ENCODE measurements at regions of chr2 and their contacts with region 1.

Region 1: DNA sequence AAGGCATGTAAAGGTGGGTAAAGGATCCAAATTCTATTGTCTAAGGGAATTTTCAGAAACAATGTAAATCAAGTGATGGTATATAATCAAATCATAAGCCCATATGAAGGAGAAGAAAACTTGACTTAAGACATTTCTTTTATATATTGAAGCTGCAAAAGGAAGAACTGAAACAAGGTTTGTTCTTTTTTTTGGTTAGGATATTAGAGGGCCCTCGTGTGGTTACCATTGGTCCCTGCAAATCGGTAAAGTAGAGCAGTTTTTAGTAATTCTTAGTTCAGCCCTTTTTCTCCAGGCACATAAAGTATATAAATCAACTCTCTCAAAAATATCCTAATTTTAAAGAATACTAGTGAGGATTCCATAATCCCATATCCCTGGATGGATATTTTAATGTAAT is 105.6 kb upstream of the STK17B start:
- DNase-seq: peak; percentile 42
- H3K4me3 Mint-ChIP-seq: no peak overlapping the region
- H3K27ac Mint-ChIP-seq: peak overlapping the region; percentile 69
- H3K4me1 Mint-ChIP-seq: peaks cover 57% of the 10 kb centered on the region
- H3K27me3 Mint-ChIP-seq: no peaks in the 10 kb centered on the region

Region 2: GRCh38 chr2:194464964-194465638 is 1811.9 kb before region 1 on chr2:
- CTCF ChIA-PET with region 1: no interaction called
- POLR2A ChIA-PET with region 1: no interaction called
- intact Hi-C with region 1: loop called (anchors 10 kb)
- DNase-seq: peak; percentile 11
- H3K4me3 Mint-ChIP-seq: no peak overlapping the region
- H3K27ac Mint-ChIP-seq: no peak overlapping the region
- H3K4me1 Mint-ChIP-seq: no peaks in the 10 kb centered on the region
- H3K27me3 Mint-ChIP-seq: no peaks in the 10 kb centered on the region

Region 3: DNA sequence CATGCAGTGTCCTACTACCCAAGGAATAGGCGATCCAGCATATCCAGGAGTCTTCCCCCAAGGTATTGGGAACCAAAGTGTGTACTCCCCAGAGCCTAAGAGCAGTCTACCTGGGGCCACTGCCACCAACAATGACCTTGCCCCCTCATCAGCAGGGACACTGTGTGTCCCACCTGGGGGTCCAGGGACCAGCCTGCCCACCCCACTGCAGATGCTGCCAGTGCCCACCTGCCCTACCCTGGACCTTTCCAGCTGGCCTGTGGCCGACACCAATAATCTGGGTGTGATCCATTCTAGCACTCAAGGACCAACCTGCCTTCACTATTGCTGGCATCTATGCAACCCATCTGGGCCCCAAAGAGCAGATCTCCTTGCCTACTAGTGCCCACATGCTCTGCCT is 240.6 kb before region 1 on chr2:
- CTCF ChIA-PET with region 1: no interaction called
- POLR2A ChIA-PET with region 1: no interaction called
- intact Hi-C with region 1: no loop called
- DNase-seq: no peak
- H3K4me3 Mint-ChIP-seq: no peak overlapping the region
- H3K27ac Mint-ChIP-seq: no peak overlapping the region
- H3K4me1 Mint-ChIP-seq: no peaks in the 10 kb centered on the region
- H3K27me3 Mint-ChIP-seq: peaks cover 10% of the 10 kb centered on the region

Region 4: GRCh38 chr2:196101325-196101991 is 175.5 kb before region 1 on chr2:
- CTCF ChIA-PET with region 1: no interaction called
- POLR2A ChIA-PET with region 1: no interaction called
- intact Hi-C with region 1: no loop called
- DNase-seq: peak; percentile 69
- H3K4me3 Mint-ChIP-seq: no peak overlapping the region
- H3K27ac Mint-ChIP-seq: peak overlapping the region; percentile 31
- H3K4me1 Mint-ChIP-seq: peaks cover 31% of the 10 kb centered on the region
- H3K27me3 Mint-ChIP-seq: no peaks in the 10 kb centered on the region

Region 5: GRCh38 chr2:196143730-196144131 is 133.3 kb before region 1 on chr2:
- CTCF ChIA-PET with region 1: interaction called, 17 read pairs
- POLR2A ChIA-PET with region 1: interaction called, 3 read pairs
- intact Hi-C with region 1: no loop called
- DNase-seq: no peak
- H3K4me3 Mint-ChIP-seq: no peak overlapping the region
- H3K27ac Mint-ChIP-seq: peak overlapping the region; percentile 87
- H3K4me1 Mint-ChIP-seq: peaks cover 59% of the 10 kb centered on the region
- H3K27me3 Mint-ChIP-seq: no peaks in the 10 kb centered on the region

Region 6: DNA sequence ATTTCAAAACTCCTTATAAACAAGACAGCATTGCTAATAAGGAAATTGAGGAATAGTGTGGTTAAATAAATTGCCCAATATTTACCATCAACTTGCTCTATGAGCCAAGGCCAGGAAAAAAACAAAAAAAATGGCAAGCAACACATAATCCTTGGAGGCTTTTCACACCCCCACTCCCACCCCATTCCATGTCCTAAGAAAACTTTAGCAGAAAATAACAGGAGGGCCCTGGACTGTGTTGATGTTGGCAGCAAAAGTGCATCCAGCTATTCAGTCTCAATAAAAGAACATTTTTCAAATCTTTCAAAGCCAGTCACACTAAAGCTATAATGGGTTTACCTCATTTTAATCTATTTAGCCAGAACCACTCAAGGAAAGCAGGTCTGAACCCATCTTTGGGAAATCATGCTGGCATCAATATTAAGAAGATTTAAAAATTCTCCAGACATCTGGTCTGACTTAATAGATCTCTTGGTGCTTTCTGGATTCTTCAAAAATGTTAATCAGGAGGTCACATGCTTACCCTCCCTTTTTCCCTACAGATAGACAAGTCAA is 71.0 kb before region 1 on chr2:
- CTCF ChIA-PET with region 1: interaction called, 6 read pairs
- POLR2A ChIA-PET with region 1: interaction called, 3 read pairs
- intact Hi-C with region 1: loop called (anchors 1 kb)
- DNase-seq: no peak
- H3K4me3 Mint-ChIP-seq: no peak overlapping the region
- H3K27ac Mint-ChIP-seq: peak overlapping the region; percentile 7
- H3K4me1 Mint-ChIP-seq: peaks cover 31% of the 10 kb centered on the region
- H3K27me3 Mint-ChIP-seq: no peaks in the 10 kb centered on the region

Region 7: DNA sequence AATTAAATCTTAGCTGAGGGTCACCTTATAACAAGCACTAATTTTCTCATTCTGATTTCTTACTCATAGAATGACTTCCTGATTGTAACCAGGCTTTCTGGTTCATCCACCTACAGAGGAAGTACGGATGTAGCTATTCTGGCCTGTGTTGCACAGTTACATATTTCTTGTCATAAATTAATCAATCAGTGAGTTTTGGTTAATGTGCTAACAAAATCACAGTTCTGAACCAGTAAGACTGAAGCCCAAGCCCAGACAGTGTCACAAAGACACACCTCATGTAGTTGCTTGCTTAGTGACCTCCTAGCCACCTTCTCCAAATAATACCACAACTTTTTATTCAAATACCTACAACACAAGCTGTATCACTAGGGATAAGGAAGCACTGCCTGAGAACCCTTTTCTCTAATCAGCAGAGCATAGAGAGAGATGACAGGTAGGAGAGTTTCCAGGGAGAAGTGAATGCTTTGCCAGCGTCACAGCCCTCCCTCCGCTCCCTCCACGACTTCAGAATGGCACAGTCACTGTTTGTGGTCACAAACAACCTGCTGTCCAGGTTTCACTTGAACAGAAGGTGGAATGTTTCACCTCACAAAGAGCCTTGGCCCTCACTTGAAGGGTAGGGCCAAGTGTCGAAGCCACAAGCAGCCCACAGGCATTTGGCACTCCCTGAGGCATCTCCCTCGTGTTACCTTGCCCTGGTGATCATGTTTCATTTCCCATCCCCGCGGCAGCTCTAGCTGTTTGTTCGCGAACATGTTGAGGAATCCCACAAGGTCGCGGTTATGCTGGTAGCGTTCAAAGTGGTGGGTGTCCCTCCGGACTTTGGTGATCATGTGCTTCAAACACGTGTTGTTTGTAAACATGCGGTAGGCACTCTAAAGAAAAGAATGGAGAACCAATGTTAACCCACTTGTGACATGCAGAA is 15.1 kb after region 1 on chr2:
- CTCF ChIA-PET with region 1: interaction called, 14 read pairs
- POLR2A ChIA-PET with region 1: interaction called, 3 read pairs
- intact Hi-C with region 1: loop called (anchors 1 kb)
- DNase-seq: no peak
- H3K4me3 Mint-ChIP-seq: peak overlapping the region; percentile 10
- H3K27ac Mint-ChIP-seq: no peak overlapping the region
- H3K4me1 Mint-ChIP-seq: peaks cover 49% of the 10 kb centered on the region
- H3K27me3 Mint-ChIP-seq: no peaks in the 10 kb centered on the region

Measured in activated CD4-positive, alpha-beta memory T cell treated with anti-CD3 and anti-CD28 coated beads for 36 hours (primary cell).